Vagina (tissue), 2 donors: ENCODE measurements at regions of chr15 and their contacts with region 1.

Region 1: GRCh38 chr15:33941279-33942063 is 26.8 kb upstream of the CHRM5 start:
- DNase-seq: no peak
- H3K4me3 ChIP-seq: no peak overlapping the region
- H3K27ac ChIP-seq: no peak overlapping the region
- H3K4me1 ChIP-seq: no peaks in the 10 kb centered on the region
- H3K27me3 ChIP-seq: no peaks in the 10 kb centered on the region
- CTCF ChIP-seq: no peak
- POLR2A ChIP-seq: no peak

Region 2: DNA sequence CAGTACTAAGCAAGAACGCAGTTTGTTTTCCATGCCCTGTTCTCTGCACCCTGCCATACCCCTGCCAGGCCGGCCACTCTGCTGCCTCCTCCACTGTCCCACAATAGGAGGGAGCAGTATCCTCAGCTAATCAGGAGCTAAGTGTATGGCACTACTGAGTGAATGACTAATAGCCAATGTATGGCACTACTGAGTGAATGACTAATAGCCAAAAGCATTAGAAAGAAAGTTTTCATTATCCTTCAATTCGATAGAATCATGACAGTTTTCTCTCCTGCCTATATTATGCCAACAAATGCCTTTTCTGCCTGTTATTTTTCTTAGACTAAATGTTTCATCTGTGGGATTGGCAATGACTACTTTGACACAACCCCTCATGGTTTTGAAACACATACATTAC is 80.7 kb before region 1 on chr15:
- intact Hi-C with region 1: loop called (anchors 10 kb)
- DNase-seq: no peak
- H3K4me3 ChIP-seq: no peak overlapping the region
- H3K27ac ChIP-seq: no peak overlapping the region
- H3K4me1 ChIP-seq: no peaks in the 10 kb centered on the region
- H3K27me3 ChIP-seq: no peaks in the 10 kb centered on the region
- CTCF ChIP-seq: no peak
- POLR2A ChIP-seq: no peak